Breast epithelium (tissue), 4 donors: ENCODE measurements at regions of chr5 and their contacts with region 1.

Region 1: DNA sequence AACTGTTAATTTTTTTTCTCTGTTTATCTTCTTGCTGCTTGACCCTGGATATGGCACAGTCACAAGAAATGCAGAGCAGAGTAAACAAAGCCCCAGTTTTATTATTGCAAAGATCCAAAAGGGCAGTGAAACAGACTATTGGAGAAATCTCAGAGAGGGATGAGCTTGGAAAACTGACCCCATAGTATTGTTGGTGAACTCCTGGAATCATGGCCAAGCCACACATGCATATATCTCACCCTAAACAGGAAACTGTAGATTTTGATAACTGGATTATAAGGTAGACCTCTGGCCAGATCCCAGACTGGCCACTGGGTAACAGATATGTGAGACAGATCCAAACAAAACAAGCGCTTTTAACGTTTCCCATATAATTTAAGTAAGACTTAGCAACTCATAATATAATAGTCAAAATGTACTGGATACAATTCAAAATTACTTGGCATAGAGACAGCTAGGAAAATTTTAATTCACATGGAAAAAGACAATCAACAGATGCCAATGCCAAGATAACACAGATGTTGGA is 263.5 kb upstream of the SEMA6A start:
- DNase-seq: no peak
- H3K4me3 ChIP-seq: no peak overlapping the region
- H3K27ac ChIP-seq: no peak overlapping the region
- H3K4me1 ChIP-seq: no peaks in the 10 kb centered on the region
- H3K27me3 ChIP-seq: no peaks in the 10 kb centered on the region
- CTCF ChIP-seq: no peak
- POLR2A ChIP-seq: no peak

Region 2: DNA sequence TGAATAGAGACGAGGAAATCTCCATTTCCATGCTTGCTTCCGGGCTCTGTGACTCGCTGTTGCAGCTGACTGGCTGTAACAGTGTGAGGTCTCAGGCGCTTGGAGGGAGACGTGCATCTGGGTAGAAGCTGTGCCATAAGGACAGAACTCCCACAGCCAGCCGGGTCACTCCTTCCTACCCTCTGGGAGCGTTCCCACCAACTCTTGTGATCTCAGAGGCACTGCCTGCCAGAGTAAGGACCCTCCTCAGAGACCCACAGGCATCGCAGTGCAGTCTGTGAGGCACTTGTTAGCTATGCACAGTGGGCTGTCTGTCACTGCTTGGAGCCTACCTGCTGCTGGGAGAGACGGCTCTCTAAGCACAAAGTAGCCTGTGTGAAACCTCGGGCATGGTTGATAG is 60.0 kb before region 1 on chr5:
- intact Hi-C with region 1: loop called (anchors 2 kb)
- DNase-seq: no peak
- H3K4me3 ChIP-seq: no peak overlapping the region
- H3K27ac ChIP-seq: peak overlapping the region in 1 of 2 donors; percentile 66
- H3K4me1 ChIP-seq: no peaks in the 10 kb centered on the region
- H3K27me3 ChIP-seq: no peaks in the 10 kb centered on the region
- CTCF ChIP-seq: no peak
- POLR2A ChIP-seq: no peak

Region 3: GRCh38 chr5:116788851-116789403 is 49.1 kb before region 1 on chr5:
- intact Hi-C with region 1: no loop called
- DNase-seq: no peak
- H3K4me3 ChIP-seq: no peak overlapping the region
- H3K27ac ChIP-seq: no peak overlapping the region
- H3K4me1 ChIP-seq: no peaks in the 10 kb centered on the region
- H3K27me3 ChIP-seq: no peaks in the 10 kb centered on the region
- CTCF ChIP-seq: no peak
- POLR2A ChIP-seq: no peak

Region 4: GRCh38 chr5:116824751-116825390 is 13.2 kb before region 1 on chr5:
- intact Hi-C with region 1: no loop called
- DNase-seq: no peak
- H3K4me3 ChIP-seq: no peak overlapping the region
- H3K27ac ChIP-seq: no peak overlapping the region
- H3K4me1 ChIP-seq: no peaks in the 10 kb centered on the region
- H3K27me3 ChIP-seq: no peaks in the 10 kb centered on the region
- CTCF ChIP-seq: no peak
- POLR2A ChIP-seq: no peak